ENCODE measurements at regions of chr7 and their contacts with region 1.

Region 1: DNA sequence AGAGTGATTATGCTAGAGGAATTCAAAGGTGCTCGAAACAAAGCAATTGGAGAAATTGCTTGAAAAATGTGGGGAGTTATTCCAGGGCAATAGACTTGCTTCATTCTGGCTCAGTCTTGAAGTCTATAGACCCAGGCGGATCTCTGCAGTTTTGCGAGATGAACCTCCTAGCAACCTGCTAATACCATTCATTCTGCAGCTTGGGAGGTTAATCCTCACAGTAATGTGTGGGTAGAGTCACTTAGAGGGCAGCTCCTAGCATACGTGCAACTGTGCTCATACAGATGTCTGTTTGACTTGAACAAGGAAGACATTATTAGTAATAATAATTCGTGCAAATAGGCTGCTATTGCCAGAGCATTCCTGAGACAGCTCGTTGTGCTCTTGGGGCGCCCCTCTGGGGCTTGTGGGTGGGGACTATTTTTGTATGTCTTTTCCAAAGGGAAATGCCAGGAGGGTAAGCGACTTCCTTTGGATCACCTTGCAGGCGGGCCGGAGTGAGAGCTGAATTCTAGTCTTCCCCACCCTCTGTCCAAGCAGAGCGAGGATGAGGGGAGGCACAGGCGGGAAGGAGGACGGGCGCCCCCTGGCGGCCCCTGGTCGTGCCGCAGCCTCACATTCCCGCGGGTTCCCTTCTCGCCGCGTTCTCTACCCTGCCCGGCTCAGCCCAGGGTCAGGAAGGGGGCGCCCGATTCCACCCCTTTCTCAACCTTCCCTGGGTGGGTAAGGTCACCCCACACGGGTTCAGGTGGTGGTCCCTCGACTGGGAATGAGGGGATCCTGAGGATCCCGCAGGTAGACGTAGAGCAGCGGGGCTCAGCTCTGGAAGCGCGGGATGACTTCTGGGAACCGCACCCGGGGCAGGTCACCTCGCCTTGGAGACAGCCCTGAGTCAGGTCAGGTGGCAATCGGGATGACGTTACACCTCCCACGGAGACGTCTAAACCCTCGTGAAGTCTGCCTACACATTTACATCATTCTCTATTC is 241.5 kb downstream of the PHTF2 start:
- DNase-seq: peak; percentile 72
- ATAC-seq: peak; percentile 92
- H3K4me3 Mint-ChIP-seq: no peak overlapping the region
- H3K27ac Mint-ChIP-seq: no peak overlapping the region
- H3K4me1 Mint-ChIP-seq: no peaks in the 10 kb centered on the region
- H3K27me3 Mint-ChIP-seq: peaks cover 18% of the 10 kb centered on the region

Region 2: DNA sequence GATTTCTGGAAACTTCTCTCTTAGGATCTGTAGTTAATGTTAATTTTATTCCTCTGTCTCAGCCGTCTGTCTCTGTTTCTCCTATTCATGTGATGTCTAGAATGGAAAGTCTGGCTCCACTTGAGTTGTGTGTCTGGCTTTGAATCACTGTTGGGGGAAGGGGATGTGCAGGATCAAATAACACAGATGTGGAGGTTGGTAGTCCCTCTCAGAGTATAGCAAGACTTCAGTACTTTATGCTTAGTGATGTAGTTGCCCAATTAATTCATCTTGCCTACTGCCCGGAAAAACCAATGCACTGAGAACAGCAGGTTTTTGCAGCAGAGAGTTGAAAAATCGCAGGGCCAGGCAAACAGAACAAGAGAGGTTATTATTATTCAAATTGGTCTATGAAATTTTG is 162.3 kb before region 1 on chr7:
- CTCF ChIA-PET with region 1: no interaction called
- POLR2A ChIA-PET with region 1: no interaction called
- intact Hi-C with region 1: no loop called
- DNase-seq: no peak
- ATAC-seq: no peak
- H3K4me3 Mint-ChIP-seq: no peak overlapping the region
- H3K27ac Mint-ChIP-seq: no peak overlapping the region
- H3K4me1 Mint-ChIP-seq: peaks cover 20% of the 10 kb centered on the region
- H3K27me3 Mint-ChIP-seq: no peaks in the 10 kb centered on the region

Region 3: DNA sequence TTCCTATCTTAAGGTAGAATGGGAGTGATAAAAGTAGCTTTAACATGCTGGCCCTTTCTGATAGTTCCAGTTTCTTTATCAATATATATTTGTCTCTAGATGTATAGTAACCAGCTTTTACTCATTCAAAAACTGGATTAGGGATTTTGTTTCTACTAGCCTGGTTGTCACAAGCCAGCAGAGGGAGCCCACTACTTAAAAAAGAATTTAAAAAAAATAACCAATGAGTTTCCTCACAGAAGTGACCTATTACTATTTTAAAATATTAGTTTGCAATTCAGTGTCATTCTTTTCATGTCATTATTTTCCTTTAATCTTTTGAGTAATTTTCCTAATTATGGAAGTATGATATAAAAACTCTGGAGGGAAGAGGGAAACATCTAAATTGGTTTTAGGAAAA is 99.4 kb before region 1 on chr7:
- CTCF ChIA-PET with region 1: interaction called, 3 read pairs
- POLR2A ChIA-PET with region 1: no interaction called
- intact Hi-C with region 1: loop called (anchors 1 to 5 kb)
- DNase-seq: peak; percentile 21
- ATAC-seq: no peak
- H3K4me3 Mint-ChIP-seq: no peak overlapping the region
- H3K27ac Mint-ChIP-seq: no peak overlapping the region
- H3K4me1 Mint-ChIP-seq: peaks cover 13% of the 10 kb centered on the region
- H3K27me3 Mint-ChIP-seq: no peaks in the 10 kb centered on the region

Measured in activated CD4-positive, alpha-beta T cell treated with anti-CD3 and anti-CD28 coated beads for 36 hours (primary cell).